Natural killer cell (primary cell): ENCODE measurements at regions of chr9 and their contacts with region 1.

Region 1: DNA sequence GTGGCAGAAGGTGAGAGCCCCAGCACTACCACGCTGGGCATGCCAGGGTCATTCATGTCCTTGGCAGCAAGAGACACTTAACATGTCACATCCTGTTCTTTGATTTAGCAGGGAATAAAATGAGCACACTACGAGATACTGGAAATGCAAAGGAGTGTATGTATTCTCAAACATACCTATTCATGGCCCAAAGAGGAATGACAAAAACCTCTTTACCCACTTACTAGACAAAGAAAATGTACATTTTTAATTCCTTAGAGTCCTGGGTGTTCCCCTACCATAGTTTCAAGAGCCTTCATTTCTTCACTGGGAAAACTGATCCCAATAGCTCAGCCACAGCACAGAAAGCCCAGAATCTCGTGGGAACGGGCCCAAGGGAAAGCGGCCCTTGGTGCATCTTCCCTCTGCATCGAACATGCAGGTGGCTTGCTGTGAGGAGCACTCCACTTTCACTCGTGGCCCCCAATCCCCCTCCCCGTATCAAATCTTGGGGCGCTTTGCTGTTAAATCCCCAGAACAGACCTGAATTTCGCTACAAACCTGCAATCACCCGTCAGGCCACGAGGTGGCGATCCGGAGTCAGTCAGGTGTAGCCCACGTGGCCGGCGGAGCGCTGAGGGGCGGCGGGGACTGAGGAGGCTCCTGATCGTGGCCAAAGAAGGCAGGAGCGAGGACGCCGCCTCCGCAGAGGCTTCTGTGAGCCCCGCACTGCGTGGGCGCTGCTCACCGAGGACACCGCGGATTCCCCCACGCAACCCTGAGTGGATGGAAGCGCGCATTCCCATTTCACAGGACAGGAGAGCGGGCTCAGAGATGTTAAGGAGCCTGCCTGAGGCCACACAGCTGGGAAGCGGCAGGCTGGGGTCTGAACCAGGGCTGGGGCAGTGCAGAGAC is 91.4 kb downstream of the LMX1B start:
- DNase-seq: peak; percentile 83 to 93
- ATAC-seq: peak; percentile 78 to 93 (median 85)
- H3K4me3 ChIP-seq: no peak overlapping the region
- H3K4me3 Mint-ChIP-seq: peak overlapping the region; percentile 78
- H3K27ac ChIP-seq: no peak overlapping the region
- H3K27ac Mint-ChIP-seq: peak overlapping the region in 1 of 2 donors; percentile 79
- H3K4me1 ChIP-seq: peaks cover 15% of the 10 kb centered on the region
- H3K4me1 Mint-ChIP-seq: peaks cover 13 to 20% of the 10 kb centered on the region in 2 donors
- H3K27me3 ChIP-seq: peaks cover 24% of the 10 kb centered on the region
- H3K27me3 Mint-ChIP-seq: peaks cover 35 to 39% of the 10 kb centered on the region in 2 donors
- CTCF ChIP-seq: peak; percentile 87

Region 2: DNA sequence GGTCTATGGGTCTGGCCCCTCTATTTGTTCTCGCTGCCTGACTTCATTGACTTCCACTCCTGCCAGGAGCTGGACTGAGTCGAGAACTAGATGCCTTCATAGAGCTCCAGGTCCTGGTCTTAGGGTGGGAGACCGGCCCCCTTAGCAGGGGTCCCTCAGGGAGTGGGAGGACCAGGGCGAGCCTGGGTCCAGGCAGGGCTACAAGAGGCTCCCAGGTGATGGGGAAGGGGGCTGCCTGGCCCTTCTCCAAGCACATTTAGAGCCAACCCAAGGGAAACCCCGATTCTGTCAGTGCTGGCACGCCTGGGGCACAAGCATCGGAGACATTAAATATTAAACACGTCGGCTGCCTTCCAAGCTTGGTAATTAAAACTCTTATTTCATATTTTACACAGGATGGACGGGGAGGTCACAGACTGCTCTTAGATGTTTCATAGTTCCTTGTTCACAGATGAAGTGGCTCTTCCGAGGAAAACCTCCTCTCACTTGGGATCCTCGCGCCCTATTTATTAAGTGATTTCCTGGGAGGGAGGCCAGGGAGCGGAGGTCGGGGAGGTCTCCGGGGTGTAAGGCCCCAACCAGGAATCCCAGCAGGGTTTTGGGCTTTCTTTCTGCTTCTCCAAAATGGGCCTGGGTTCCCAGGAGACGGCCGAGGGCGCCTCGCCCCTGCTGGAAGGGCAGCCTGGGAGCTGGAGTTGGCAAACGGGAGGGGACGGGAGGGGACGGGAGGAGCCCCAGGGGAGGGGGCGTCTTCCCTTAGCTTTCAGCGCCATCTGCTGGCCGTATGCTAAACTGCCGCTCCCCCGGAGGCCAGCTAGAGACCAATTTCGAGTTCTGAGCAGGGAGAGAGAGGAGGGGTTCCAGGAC is 76.3 kb after region 1 on chr9:
- intact Hi-C with region 1: loop called (anchors 1 kb)
- DNase-seq: peak; percentile 84 to 88
- ATAC-seq: peak; percentile 81 to 99 (median 98)
- H3K4me3 ChIP-seq: no peak overlapping the region
- H3K4me3 Mint-ChIP-seq: no peak overlapping the region
- H3K27ac ChIP-seq: no peak overlapping the region
- H3K27ac Mint-ChIP-seq: no peak overlapping the region
- H3K4me1 ChIP-seq: peaks cover 6% of the 10 kb centered on the region
- H3K4me1 Mint-ChIP-seq: no peaks in the 10 kb centered on the region
- H3K27me3 ChIP-seq: peaks cover 3% of the 10 kb centered on the region
- H3K27me3 Mint-ChIP-seq: peaks cover 11 to 13% of the 10 kb centered on the region in 2 donors
- CTCF ChIP-seq: peak; percentile 96

Region 3: GRCh38 chr9:127277099-127277498 is 572.0 kb after region 1 on chr9:
- intact Hi-C with region 1: no loop called
- DNase-seq: no peak
- ATAC-seq: no peak
- H3K4me3 ChIP-seq: no peak overlapping the region
- H3K4me3 Mint-ChIP-seq: no peak overlapping the region
- H3K27ac ChIP-seq: no peak overlapping the region
- H3K27ac Mint-ChIP-seq: no peak overlapping the region
- H3K4me1 ChIP-seq: no peaks in the 10 kb centered on the region
- H3K4me1 Mint-ChIP-seq: no peaks in the 10 kb centered on the region
- H3K27me3 ChIP-seq: no peaks in the 10 kb centered on the region
- H3K27me3 Mint-ChIP-seq: peaks cover 10 to 32% of the 10 kb centered on the region in 2 donors
- CTCF ChIP-seq: no peak